ENCODE measurements at regions of chr12 and their contacts with region 1.

Region 1: GRCh38 chr12:11171145-11171968 is at the start of gene SMIM10L1:
- DNase-seq: peak; percentile 93
- H3K4me3 ChIP-seq: peak within 1 kb of the TSS; percentile 91 to 99 (median 91)
- H3K27ac ChIP-seq: peak within 1 kb of the TSS; percentile 83
- H3K4me1 ChIP-seq: peaks cover 7% of the 10 kb centered on the region
- H3K27me3 ChIP-seq: no peaks in the 10 kb centered on the region
- CTCF ChIP-seq: no peak
- total RNA-seq, gene SMIM10L1: 7.2 to 10.2 TPM

Region 2: GRCh38 chr12:10941916-10942607 is 229.3 kb before region 1 on chr12:
- CTCF ChIA-PET with region 1: interaction called, 3 read pairs
- dilution Hi-C with region 1: no loop called
- in situ Hi-C with region 1: no loop called
- intact Hi-C with region 1: loop called (anchors 2 kb)
- DNase-seq: peak; percentile 94
- H3K4me3 ChIP-seq: no peak overlapping the region
- H3K27ac ChIP-seq: peak overlapping the region; percentile 70
- H3K4me1 ChIP-seq: peaks cover 39% of the 10 kb centered on the region
- H3K27me3 ChIP-seq: no peaks in the 10 kb centered on the region
- CTCF ChIP-seq: no peak

Region 3: GRCh38 chr12:11408096-11408495 is 236.7 kb after region 1 on chr12:
- CTCF ChIA-PET with region 1: interaction called, 15 read pairs
- dilution Hi-C with region 1: no loop called
- in situ Hi-C with region 1: no loop called
- intact Hi-C with region 1: no loop called
- DNase-seq: peak; percentile 38
- H3K4me3 ChIP-seq: no peak overlapping the region
- H3K27ac ChIP-seq: no peak overlapping the region
- H3K4me1 ChIP-seq: peaks cover 6% of the 10 kb centered on the region
- H3K27me3 ChIP-seq: no peaks in the 10 kb centered on the region
- CTCF ChIP-seq: no peak

Measured in mammary epithelial cell (primary cell).